Activated CD4-positive, alpha-beta T cell treated with anti-CD3 and anti-CD28 coated beads, Interleukin-2, amount 10 ng/mL, durations not matched to agents 24 days and 14 days (primary cell): ENCODE measurements at regions of chr1 and their contacts with region 1.

Region 1: DNA sequence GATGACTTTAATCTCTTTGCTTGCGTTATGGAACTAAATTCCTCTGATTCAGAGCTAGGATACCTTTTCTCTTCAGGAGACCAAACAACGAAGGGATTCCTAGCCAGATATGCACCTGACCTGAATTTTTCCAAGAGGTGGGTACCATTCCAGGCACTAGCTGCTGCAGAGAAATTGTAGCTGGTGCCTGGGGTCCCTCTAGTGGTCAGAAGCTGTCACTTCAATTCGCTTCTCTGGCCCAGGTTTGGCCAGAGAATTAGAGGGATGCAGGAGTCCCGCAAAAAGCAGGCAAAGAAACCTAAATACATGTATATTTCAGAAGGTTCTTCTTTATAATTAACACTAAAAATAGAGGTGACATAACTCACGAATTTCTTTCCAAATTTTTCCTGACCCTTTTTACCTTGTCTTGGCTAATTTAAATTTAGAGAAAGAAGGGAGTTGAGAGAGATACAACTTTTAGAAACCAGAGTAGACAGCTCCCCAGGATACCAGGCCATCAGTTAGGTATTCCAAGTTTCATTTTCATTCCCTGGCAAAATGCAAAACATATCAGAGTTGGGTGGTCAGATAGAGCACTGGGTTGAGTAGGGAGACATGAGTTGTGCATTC is 9.6 kb downstream of the ACKR1 start:
- DNase-seq: peak; percentile 77
- H3K4me3 Mint-ChIP-seq: no peak overlapping the region
- H3K27ac Mint-ChIP-seq: no peak overlapping the region
- H3K4me1 Mint-ChIP-seq: peaks cover 2% of the 10 kb centered on the region
- H3K27me3 Mint-ChIP-seq: peaks cover 19% of the 10 kb centered on the region

Region 2: DNA sequence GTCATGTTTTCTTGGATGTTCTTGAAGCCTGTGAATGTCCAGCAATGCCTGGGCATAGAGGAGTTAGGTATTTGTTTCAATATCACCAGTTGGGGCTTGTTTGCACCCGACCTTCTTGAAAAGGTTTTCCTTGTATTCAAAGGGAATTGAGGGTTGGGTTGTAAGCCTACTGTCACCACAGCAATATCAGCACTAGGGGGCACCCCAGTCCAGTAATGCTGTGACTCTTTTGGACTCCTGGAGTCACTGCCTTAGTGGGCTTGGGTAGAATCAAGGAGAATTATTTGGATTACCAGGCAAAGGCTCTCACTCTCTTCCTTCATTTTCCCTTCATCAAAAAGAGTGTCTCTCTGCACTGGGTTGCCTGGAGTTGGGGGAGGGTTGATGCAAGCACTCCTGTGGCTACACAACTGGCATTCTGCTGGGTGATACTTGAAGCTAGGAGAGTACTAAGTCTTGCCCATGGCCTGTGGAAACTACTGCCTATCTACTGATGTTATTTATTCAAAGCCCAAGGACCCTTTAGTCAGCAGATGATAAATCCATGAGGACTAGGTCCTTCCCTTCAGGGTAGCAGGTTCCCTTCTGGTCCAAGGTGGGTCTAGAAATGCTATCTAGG is 707.8 kb before region 1 on chr1:
- intact Hi-C with region 1: loop called (anchors 5 kb)
- DNase-seq: peak; percentile 83
- H3K4me3 Mint-ChIP-seq: no peak overlapping the region
- H3K27ac Mint-ChIP-seq: no peak overlapping the region
- H3K4me1 Mint-ChIP-seq: no peaks in the 10 kb centered on the region
- H3K27me3 Mint-ChIP-seq: peaks cover 32% of the 10 kb centered on the region

Region 3: GRCh38 chr1:159132271-159132881 is 81.9 kb before region 1 on chr1:
- intact Hi-C with region 1: loop called (anchors 1 kb)
- DNase-seq: peak; percentile 88
- H3K4me3 Mint-ChIP-seq: no peak overlapping the region
- H3K27ac Mint-ChIP-seq: no peak overlapping the region
- H3K4me1 Mint-ChIP-seq: no peaks in the 10 kb centered on the region
- H3K27me3 Mint-ChIP-seq: peaks cover 7% of the 10 kb centered on the region

Region 4: DNA sequence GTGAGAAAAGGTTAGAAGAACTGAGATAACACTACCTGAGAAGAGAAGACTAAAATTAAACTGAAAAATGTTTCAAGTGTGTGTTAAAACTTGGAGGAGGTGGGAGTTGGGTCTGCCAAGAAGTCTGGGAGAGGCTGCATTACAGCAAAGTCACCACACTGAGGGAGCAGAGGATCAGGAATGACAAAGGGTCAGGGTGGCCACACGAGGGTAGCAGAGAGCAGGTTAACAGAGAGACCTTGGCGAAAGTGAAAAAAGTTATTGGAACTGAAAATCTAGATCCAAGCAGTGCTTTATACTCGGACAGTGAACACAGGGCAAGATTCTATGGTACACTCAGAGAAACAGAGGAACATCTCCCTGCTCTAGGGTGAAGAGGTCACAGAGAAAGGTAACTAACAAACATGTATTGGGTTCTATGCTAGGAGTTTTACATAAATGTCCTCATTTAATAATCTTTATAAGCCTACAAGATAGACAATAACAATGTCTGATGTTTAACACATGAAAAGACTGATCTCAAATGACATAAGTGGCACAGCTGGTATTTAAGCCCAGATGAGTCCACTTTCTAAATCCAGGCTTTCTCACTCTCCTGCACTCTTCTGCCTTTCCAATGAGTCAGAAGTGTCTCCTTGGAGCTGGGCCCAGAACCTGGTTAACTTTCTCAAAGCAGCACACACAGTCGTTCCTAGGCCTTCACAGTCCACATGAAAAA is 53.1 kb before region 1 on chr1:
- intact Hi-C with region 1: loop called (anchors 1 kb)
- DNase-seq: peak; percentile 86
- H3K4me3 Mint-ChIP-seq: no peak overlapping the region
- H3K27ac Mint-ChIP-seq: no peak overlapping the region
- H3K4me1 Mint-ChIP-seq: no peaks in the 10 kb centered on the region
- H3K27me3 Mint-ChIP-seq: peaks cover 21% of the 10 kb centered on the region

Region 5: GRCh38 chr1:159197561-159198557 is 16.4 kb before region 1 on chr1:
- intact Hi-C with region 1: no loop called
- DNase-seq: peak; percentile 82
- H3K4me3 Mint-ChIP-seq: no peak overlapping the region
- H3K27ac Mint-ChIP-seq: no peak overlapping the region
- H3K4me1 Mint-ChIP-seq: no peaks in the 10 kb centered on the region
- H3K27me3 Mint-ChIP-seq: peaks cover 19% of the 10 kb centered on the region

Region 6: DNA sequence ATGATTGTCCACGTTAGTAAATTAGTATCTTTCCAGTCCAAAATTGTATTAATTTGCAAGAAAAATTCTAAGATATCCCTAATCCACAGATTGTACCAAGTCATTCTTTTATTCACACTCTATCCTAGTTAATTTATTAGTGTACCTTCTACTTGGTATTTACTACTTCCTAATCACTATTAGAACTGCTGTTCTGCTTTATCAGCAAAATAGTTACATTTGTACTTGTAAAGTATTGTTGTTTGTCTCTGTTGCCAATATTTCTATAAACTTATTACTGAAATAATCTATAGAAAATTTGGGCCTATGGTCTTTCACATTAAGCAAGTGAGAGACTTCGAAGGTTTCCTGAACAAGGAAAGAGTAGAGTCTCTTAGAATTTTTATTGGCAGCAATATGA is 505.7 kb after region 1 on chr1:
- intact Hi-C with region 1: no loop called
- DNase-seq: no peak
- H3K4me3 Mint-ChIP-seq: no peak overlapping the region
- H3K27ac Mint-ChIP-seq: no peak overlapping the region
- H3K4me1 Mint-ChIP-seq: no peaks in the 10 kb centered on the region
- H3K27me3 Mint-ChIP-seq: no peaks in the 10 kb centered on the region